Colonic mucosa (tissue), 4 donors: ENCODE measurements at regions of chr18 and their contacts with region 1.

Region 1: GRCh38 chr18:32333781-32334180 is 136.9 kb downstream of the GAREM1 start:
- DNase-seq: no peak
- H3K4me3 ChIP-seq: no peak overlapping the region
- H3K27ac ChIP-seq: no peak overlapping the region
- H3K4me1 ChIP-seq: no peaks in the 10 kb centered on the region
- H3K27me3 ChIP-seq: no peaks in the 10 kb centered on the region
- CTCF ChIP-seq: no peak

Region 2: GRCh38 chr18:32315881-32316280 is 17.9 kb before region 1 on chr18:
- intact Hi-C with region 1: loop called (anchors 1 kb)
- DNase-seq: no peak
- H3K4me3 ChIP-seq: no peak overlapping the region
- H3K27ac ChIP-seq: no peak overlapping the region
- H3K4me1 ChIP-seq: no peaks in the 10 kb centered on the region
- H3K27me3 ChIP-seq: no peaks in the 10 kb centered on the region
- CTCF ChIP-seq: no peak

Region 3: DNA sequence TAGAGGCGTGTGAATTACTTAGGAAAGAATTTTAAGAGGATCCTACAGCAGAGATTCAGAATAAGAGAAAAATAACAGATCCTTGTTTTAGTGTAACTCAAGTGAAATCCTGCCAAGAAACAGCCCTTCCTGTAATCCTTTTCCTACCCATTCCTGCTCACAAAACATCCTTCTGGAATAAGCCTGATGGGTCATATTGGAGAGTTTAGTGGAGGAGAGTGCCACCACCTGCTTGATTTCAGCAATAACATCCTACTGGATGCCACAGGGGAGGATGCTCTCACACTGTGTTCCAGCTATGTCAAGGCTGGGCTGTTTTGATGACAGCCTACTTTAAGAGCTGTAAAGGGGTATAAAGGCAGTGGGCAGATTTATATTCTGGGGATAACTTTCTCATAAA is 1161.5 kb after region 1 on chr18:
- intact Hi-C with region 1: no loop called
- DNase-seq: no peak
- H3K4me3 ChIP-seq: no peak overlapping the region
- H3K27ac ChIP-seq: no peak overlapping the region
- H3K4me1 ChIP-seq: no peaks in the 10 kb centered on the region
- H3K27me3 ChIP-seq: no peaks in the 10 kb centered on the region
- CTCF ChIP-seq: peak; percentile 36